IMR-90 (cell line): ENCODE measurements at regions of chr1 and their contacts with region 1.

Region 1: GRCh38 chr1:168065506-168065905 is 71.2 kb downstream of the GPR161 start:
- DNase-seq: no peak
- ATAC-seq: no peak
- H3K4me3 ChIP-seq: no peak overlapping the region
- H3K27ac ChIP-seq: no peak overlapping the region
- H3K4me1 ChIP-seq: no peaks in the 10 kb centered on the region
- H3K27me3 ChIP-seq: no peaks in the 10 kb centered on the region
- CTCF ChIP-seq: no peak
- POLR2A ChIP-seq: no peak
- RAD21 ChIP-seq: no peak

Region 2: DNA sequence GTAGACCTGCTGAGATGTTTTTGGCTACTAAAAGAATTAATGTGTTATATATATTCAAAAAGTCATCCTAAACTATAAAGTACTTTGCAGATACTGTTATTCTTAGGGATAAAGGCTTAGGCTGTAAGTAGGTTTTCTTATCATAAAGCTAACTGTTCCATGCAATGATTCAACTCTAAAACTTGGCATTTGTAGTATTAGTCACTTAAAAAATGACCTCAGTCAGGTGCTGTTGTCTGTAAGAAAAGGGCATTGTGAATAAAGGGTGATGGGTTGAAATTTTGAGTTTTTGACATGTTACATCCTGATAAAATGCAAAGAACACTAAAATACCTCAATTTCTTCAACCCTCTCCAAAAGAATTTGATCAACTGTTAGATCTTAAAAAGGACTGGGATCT is 184.4 kb before region 1 on chr1:
- CTCF ChIA-PET with region 1: no interaction called
- POLR2A ChIA-PET with region 1: no interaction called
- dilution Hi-C with region 1: no loop called
- in situ Hi-C with region 1: no loop called
- intact Hi-C with region 1: no loop called
- DNase-seq: peak; percentile 69
- ATAC-seq: peak; percentile 47
- H3K4me3 ChIP-seq: no peak overlapping the region
- H3K27ac ChIP-seq: no peak overlapping the region
- H3K4me1 ChIP-seq: peaks cover 10% of the 10 kb centered on the region
- H3K27me3 ChIP-seq: no peaks in the 10 kb centered on the region
- CTCF ChIP-seq: no peak
- POLR2A ChIP-seq: no peak
- RAD21 ChIP-seq: no peak

Region 3: GRCh38 chr1:167957710-167958109 is 107.8 kb before region 1 on chr1:
- CTCF ChIA-PET with region 1: no interaction called
- POLR2A ChIA-PET with region 1: no interaction called
- dilution Hi-C with region 1: no loop called
- in situ Hi-C with region 1: no loop called
- intact Hi-C with region 1: loop called (anchors 5 kb)
- DNase-seq: peak; percentile 38
- ATAC-seq: no peak
- H3K4me3 ChIP-seq: no peak overlapping the region
- H3K27ac ChIP-seq: no peak overlapping the region
- H3K4me1 ChIP-seq: no peaks in the 10 kb centered on the region
- H3K27me3 ChIP-seq: no peaks in the 10 kb centered on the region
- CTCF ChIP-seq: no peak
- POLR2A ChIP-seq: no peak
- RAD21 ChIP-seq: no peak

Region 4: DNA sequence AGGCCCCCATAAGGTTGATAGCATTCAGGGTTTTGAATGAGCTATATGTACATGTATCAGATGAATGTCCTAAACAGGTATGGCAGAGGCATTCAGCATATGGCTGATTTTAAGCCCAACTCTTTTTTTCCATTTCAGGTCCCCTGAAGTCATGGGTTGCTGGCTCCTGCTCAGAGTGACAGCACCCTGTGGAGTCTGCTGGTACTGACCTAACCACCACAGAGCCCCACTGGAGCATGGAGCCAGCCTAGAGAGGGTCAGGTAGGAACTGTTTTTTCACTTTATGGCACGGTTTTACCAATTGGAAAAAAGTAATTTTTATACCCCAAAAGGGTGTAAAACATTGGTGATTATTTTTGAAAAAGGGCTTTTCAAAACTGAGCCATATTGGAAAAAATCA is 46.1 kb before region 1 on chr1:
- CTCF ChIA-PET with region 1: no interaction called
- POLR2A ChIA-PET with region 1: no interaction called
- dilution Hi-C with region 1: no loop called
- in situ Hi-C with region 1: no loop called
- intact Hi-C with region 1: loop called (anchors 5 kb)
- DNase-seq: no peak
- ATAC-seq: no peak
- H3K4me3 ChIP-seq: no peak overlapping the region
- H3K27ac ChIP-seq: no peak overlapping the region
- H3K4me1 ChIP-seq: no peaks in the 10 kb centered on the region
- H3K27me3 ChIP-seq: no peaks in the 10 kb centered on the region
- CTCF ChIP-seq: no peak
- POLR2A ChIP-seq: no peak
- RAD21 ChIP-seq: no peak

Region 5: GRCh38 chr1:168032029-168032428 is 33.5 kb before region 1 on chr1:
- CTCF ChIA-PET with region 1: no interaction called
- POLR2A ChIA-PET with region 1: no interaction called
- dilution Hi-C with region 1: no loop called
- in situ Hi-C with region 1: no loop called
- intact Hi-C with region 1: loop called (anchors 5 kb)
- DNase-seq: no peak
- ATAC-seq: no peak
- H3K4me3 ChIP-seq: no peak overlapping the region
- H3K27ac ChIP-seq: no peak overlapping the region
- H3K4me1 ChIP-seq: no peaks in the 10 kb centered on the region
- H3K27me3 ChIP-seq: no peaks in the 10 kb centered on the region
- CTCF ChIP-seq: no peak
- POLR2A ChIP-seq: no peak
- RAD21 ChIP-seq: no peak

Region 6: DNA sequence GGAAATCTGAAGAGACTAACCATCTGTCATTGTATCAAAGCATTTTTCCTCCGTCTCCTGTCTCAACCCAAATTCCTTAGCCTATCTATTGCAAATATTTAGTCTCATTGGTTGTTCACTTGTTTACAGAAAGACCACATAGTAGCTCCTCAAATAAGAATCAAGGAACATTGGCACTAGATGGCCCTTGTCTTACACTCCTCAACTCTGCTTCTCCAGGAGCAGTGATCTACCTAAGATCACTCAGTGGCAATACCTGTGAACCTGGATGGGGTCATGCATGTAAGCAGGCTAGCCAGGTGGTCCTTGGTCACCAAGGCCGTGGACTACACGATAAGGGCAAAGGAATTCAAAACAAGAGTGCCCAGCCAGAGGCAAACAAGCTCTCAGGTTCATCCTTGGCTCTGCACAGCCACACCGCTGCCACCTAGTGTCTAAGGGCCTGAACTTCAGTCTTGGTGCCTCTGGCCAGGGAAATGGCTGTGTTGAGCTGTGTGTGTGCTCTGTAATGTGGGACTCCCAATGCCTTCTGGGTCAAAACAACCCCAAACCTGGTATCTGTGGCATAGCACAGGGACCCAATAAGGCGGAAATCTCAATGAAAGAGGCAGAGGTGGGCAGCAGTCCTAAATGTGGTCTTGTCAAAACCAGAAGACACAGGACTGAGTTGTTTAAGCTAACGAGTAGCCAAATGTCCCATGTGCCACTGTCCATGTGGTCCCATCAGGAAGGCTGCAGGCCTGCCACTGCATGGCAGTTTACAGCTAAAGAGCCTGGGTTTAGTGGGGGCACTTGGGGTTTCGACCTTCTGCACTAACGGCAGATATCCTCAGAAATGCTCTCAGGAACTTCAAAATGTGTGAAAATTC is 16.7 kb after region 1 on chr1:
- CTCF ChIA-PET with region 1: interaction called, 12 read pairs
- POLR2A ChIA-PET with region 1: no interaction called
- dilution Hi-C with region 1: no loop called
- in situ Hi-C with region 1: no loop called
- intact Hi-C with region 1: no loop called
- DNase-seq: peak; percentile 79
- ATAC-seq: peak; percentile 89
- H3K4me3 ChIP-seq: no peak overlapping the region
- H3K27ac ChIP-seq: no peak overlapping the region
- H3K4me1 ChIP-seq: peaks cover 9% of the 10 kb centered on the region; the same call in 1 of the 2 replicates
- H3K27me3 ChIP-seq: no peaks in the 10 kb centered on the region
- CTCF ChIP-seq: peak; percentile 83
- POLR2A ChIP-seq: no peak
- RAD21 ChIP-seq: peak; percentile 78

Region 7: DNA sequence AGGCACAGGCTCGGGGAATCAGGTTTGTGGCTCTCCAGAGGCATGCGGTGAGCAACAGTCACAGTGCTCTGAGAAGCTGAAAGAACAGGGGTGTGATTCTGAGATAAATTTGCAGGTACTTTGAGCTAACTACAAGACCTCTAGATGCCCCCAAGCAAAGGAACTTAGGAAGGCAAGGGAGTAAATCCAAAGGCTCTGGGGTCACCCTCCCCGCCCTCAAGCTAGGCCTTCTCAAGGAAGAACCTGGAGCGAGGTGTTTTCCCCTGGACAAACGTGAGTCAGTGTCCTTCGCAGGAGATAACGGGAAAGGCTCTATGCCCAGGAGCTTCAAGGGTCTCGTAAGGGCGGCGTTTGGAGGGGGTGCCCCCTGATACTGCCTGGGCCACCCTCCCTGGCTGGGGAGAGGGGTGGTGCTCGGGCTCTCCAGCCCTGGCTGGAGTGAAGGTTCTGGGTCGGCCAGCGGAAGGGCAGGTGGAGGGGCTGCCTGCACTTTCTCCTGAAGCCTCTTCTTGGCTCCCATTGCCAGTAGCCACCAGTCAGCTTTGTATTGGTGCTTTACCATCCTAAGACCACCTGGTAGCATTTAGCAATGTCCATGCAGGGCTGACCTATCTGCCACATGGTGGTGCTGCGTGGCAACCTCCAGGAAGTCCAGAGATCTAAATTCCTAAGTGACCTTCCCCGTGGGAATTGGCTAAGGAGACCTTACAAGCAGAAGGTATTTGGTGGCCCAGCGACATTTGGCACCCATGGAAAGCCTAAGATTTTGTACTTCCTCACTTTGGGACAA is 27.3 kb after region 1 on chr1:
- CTCF ChIA-PET with region 1: no interaction called
- POLR2A ChIA-PET with region 1: no interaction called
- dilution Hi-C with region 1: no loop called
- in situ Hi-C with region 1: no loop called
- intact Hi-C with region 1: no loop called
- DNase-seq: no peak
- ATAC-seq: no peak
- H3K4me3 ChIP-seq: no peak overlapping the region
- H3K27ac ChIP-seq: no peak overlapping the region
- H3K4me1 ChIP-seq: peaks cover 8% of the 10 kb centered on the region
- H3K27me3 ChIP-seq: no peaks in the 10 kb centered on the region
- CTCF ChIP-seq: peak; percentile 30
- POLR2A ChIP-seq: no peak
- RAD21 ChIP-seq: peak; percentile 43